Natural killer cell (primary cell): ENCODE measurements at regions of chr9 and their contacts with region 1.

Region 1: DNA sequence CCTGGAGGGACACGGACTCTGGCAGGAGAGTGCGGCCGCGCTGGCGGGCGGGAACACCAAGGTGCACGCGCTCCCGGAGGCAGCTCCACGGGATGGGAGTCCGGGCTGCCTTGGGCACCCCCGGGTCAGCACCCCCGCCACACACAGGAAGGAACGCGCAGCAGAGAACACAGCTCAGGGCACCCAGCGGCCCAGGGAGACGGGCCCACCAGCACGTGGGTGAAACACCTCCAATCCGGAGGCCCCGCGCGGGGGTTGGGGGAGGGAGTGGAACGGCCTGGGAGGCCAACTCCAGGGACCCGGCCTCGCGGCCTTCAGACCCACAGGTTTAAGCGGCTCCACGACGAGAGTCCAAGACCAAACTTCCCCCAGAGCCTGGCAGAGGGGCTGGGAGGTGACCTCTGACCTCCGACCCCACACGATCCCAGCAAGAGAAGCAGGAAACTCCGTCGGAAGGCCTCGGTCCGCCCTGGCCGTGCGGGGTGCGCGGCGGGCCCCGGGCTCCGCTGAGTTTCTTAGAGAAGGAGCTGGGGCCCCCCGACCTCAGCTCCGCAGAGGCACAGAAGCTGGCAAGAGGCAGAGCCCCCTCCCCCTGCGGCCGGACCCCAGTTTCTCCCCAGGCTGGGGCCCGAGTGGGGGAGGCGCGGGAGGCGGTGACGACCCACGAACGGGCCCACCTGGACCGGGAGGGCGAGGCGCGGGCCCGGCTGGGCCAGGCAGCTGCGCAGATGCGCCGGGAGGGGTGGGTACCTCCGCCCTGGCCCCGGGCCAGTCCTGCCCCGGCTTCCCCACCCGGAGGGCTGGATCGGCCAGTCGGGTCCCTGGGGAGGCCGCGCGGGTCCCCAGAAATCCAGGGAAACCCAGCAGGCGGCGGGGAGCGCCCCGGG is 851 bp downstream of the NACC2 start:
- DNase-seq: peak; percentile 64 to 65
- ATAC-seq: peak; percentile 74 to 79 (median 78)
- H3K4me3 ChIP-seq: peak overlapping the region; percentile 50
- H3K4me3 Mint-ChIP-seq: peak overlapping the region; percentile 89
- H3K27ac ChIP-seq: peak overlapping the region; percentile 72
- H3K27ac Mint-ChIP-seq: peak overlapping the region; percentile 62 to 83
- H3K4me1 ChIP-seq: peaks cover 51% of the 10 kb centered on the region
- H3K4me1 Mint-ChIP-seq: peaks cover 10 to 51% of the 10 kb centered on the region in 2 donors
- H3K27me3 ChIP-seq: no peaks in the 10 kb centered on the region
- H3K27me3 Mint-ChIP-seq: no peaks in the 10 kb centered on the region
- CTCF ChIP-seq: no peak

Region 2: DNA sequence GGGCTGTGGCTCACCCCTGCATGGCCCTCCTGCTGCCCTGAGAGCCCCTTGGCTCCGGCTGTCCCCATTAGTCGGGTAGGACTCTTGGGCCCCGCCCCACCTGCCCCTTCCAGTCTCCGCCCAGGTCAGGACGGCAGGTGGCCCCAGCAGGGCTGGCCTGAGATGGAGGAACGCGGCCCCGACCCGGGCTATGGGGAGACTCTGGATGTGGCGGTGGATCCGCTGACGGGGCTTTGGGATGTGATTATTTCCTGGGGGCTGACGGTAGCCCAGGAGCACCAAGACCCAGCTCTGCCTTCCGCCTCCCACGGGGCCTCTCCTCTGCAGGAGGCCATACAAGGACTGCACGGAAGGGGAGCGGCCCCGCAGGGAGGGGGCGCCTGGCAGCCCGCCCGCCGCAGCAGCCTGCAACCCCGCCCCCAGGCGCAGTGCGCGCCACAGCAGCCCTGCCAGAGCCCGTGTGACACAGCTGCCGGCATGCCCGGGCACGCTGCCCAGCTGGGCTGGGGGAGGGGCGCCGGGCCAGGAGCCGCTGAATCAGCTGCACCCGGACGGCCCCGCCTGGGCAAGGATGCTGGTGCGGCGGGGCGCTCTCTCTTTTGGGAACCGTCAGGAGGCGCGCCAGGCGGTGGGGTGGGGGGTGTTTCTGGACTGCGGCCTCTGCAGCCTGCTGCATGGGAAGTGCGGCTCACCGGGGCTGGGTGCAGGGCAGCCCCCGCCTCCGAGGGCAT is 15.3 kb after region 1 on chr9:
- intact Hi-C with region 1: loop called (anchors 1 kb)
- DNase-seq: peak; percentile 83 to 94
- ATAC-seq: peak; percentile 81 to 93 (median 88)
- H3K4me3 ChIP-seq: peak overlapping the region; percentile 55
- H3K4me3 Mint-ChIP-seq: peak overlapping the region; percentile 85
- H3K27ac ChIP-seq: peak overlapping the region; percentile 98
- H3K27ac Mint-ChIP-seq: peak overlapping the region; percentile 97
- H3K4me1 ChIP-seq: peaks cover 73% of the 10 kb centered on the region
- H3K4me1 Mint-ChIP-seq: peaks cover 19 to 71% of the 10 kb centered on the region in 2 donors
- H3K27me3 ChIP-seq: no peaks in the 10 kb centered on the region
- H3K27me3 Mint-ChIP-seq: no peaks in the 10 kb centered on the region
- CTCF ChIP-seq: no peak

Region 3: GRCh38 chr9:136133191-136133958 is 39.1 kb after region 1 on chr9:
- intact Hi-C with region 1: no loop called
- DNase-seq: peak in 1 of 2 donors; percentile 51
- ATAC-seq: peak in 2 of 3 donors; percentile 68 to 77
- H3K4me3 ChIP-seq: no peak overlapping the region
- H3K4me3 Mint-ChIP-seq: peak overlapping the region; percentile 77
- H3K27ac ChIP-seq: no peak overlapping the region
- H3K27ac Mint-ChIP-seq: no peak overlapping the region
- H3K4me1 ChIP-seq: peaks cover 10% of the 10 kb centered on the region
- H3K4me1 Mint-ChIP-seq: peaks cover 0 to 11% of the 10 kb centered on the region in 2 donors
- H3K27me3 ChIP-seq: peaks cover 13% of the 10 kb centered on the region
- H3K27me3 Mint-ChIP-seq: peaks cover 5 to 32% of the 10 kb centered on the region in 2 donors
- CTCF ChIP-seq: peak; percentile 17